ENCODE measurements at regions of chr5 and their contacts with region 1.

Region 1: GRCh38 chr5:96601811-96602244 is 60.3 kb upstream of the CAST start:
- DNase-seq: peak; percentile 59 to 78 (median 67)
- H3K4me3 ChIP-seq: no peak overlapping the region
- H3K27ac ChIP-seq: no peak overlapping the region
- H3K4me1 ChIP-seq: no peaks in the 10 kb centered on the region
- H3K27me3 ChIP-seq: peaks cover 0 to 5% (median 2%) of the 10 kb centered on the region in 5 experiments

Region 2: GRCh38 chr5:96315431-96315830 is 286.4 kb before region 1 on chr5:
- CTCF ChIA-PET with region 1: no interaction called
- POLR2A ChIA-PET with region 1: no interaction called
- DNase-seq: no peak
- H3K4me3 ChIP-seq: no peak overlapping the region
- H3K27ac ChIP-seq: no peak overlapping the region
- H3K4me1 ChIP-seq: no peaks in the 10 kb centered on the region
- H3K27me3 ChIP-seq: no peaks in the 10 kb centered on the region

Region 3: DNA sequence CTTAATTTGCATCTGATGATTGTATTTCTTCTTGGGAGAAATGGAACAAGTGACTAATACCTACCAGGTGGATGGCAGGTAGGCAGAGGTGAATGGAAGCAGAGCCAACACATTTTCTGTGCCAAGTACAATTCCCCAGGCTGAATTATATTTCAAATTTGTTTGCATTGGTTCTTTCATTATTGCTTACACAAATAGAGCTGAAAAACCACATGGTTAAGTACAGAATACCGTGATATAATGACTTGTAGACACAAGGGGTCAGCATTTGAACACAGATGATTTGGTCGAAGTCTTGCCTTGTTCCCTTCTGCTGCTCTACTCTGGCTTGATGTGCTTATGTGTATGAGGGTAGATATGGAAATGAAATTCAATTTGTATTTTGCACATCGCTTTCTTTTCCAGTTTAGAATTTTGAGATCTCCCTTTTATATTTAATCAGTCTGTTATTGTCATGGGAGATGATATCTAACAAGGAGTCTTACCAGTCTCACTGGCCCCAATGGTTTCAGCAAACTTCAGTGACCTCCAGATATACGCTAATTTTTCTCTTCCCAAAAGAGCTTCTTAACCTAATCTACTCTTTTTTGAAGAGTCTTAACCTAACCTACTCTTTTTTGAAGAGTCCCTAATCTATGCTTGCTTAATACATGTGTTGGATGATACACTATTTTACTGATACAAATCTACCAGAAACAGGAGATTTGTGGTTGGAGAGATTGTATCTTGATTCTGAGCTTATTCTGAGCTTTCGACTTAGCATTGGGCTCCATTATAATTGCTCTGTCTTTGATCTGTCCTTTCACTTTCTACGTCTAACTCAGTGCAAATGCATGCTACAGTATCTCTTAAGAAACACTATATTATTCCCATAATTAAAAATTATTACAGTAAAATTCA is 256.9 kb before region 1 on chr5:
- CTCF ChIA-PET with region 1: interaction called, 57 read pairs
- POLR2A ChIA-PET with region 1: no interaction called
- DNase-seq: peak; percentile 67 to 87 (median 84)
- H3K4me3 ChIP-seq: no peak overlapping the region
- H3K27ac ChIP-seq: no peak overlapping the region
- H3K4me1 ChIP-seq: peaks cover 0 to 6% (median 2%) of the 10 kb centered on the region in 4 experiments
- H3K27me3 ChIP-seq: peaks cover 0 to 4% (median 0%) of the 10 kb centered on the region in 5 experiments

Region 4: DNA sequence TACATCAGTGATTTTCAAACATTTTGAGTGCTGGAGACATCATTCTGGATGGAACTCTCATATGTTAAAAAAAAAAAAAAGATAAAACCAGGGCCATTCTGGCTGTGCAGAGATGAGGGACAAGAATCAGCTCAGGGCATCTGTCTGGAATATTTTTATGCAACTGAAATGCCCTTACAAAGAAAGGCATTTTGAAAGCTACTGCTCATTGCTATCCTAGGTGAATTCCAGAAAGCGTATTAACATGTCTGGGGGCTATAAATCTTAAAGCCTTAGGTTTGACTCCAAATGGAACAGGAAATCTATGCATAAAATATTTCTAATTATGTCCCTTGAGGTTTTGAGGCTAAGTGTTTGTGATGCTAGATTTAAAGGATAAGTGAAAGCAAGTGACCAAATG is 153.9 kb before region 1 on chr5:
- CTCF ChIA-PET with region 1: no interaction called
- POLR2A ChIA-PET with region 1: no interaction called
- DNase-seq: no peak
- H3K4me3 ChIP-seq: no peak overlapping the region
- H3K27ac ChIP-seq: no peak overlapping the region
- H3K4me1 ChIP-seq: no peaks in the 10 kb centered on the region
- H3K27me3 ChIP-seq: peaks cover 2 to 5% (median 3%) of the 10 kb centered on the region in 5 experiments

Region 5: DNA sequence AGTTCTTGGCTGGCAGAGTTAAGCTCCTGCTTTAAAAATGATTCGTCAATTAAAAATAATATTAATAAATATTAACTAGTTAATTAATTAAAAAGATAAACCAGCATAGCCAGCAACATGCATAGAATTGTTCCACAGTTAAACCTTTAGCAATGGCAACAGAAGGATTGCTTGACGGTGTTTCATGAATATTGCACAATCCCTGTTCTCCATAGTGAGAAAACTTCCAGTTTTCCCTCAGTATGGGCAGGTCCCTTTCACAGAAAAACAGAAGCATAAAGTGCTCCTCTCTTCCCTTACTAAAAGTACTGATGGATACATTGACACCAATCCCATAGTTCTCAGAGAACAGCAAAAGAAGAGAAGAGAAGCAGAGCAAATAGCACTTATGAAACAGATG is 11.0 kb before region 1 on chr5:
- CTCF ChIA-PET with region 1: interaction called, 12 read pairs
- POLR2A ChIA-PET with region 1: interaction called, 4 read pairs
- DNase-seq: no peak
- H3K4me3 ChIP-seq: no peak overlapping the region
- H3K27ac ChIP-seq: no peak overlapping the region
- H3K4me1 ChIP-seq: no peaks in the 10 kb centered on the region
- H3K27me3 ChIP-seq: peaks cover 0 to 2% (median 0%) of the 10 kb centered on the region in 5 experiments

Region 6: GRCh38 chr5:96614110-96614691 is 12.4 kb after region 1 on chr5:
- CTCF ChIA-PET with region 1: interaction called, 24 read pairs
- POLR2A ChIA-PET with region 1: no interaction called
- DNase-seq: peak; percentile 45 to 65 (median 61)
- H3K4me3 ChIP-seq: no peak overlapping the region
- H3K27ac ChIP-seq: no peak overlapping the region
- H3K4me1 ChIP-seq: peaks cover 0 to 6% (median 3%) of the 10 kb centered on the region in 4 experiments
- H3K27me3 ChIP-seq: no peaks in the 10 kb centered on the region

Region 7: DNA sequence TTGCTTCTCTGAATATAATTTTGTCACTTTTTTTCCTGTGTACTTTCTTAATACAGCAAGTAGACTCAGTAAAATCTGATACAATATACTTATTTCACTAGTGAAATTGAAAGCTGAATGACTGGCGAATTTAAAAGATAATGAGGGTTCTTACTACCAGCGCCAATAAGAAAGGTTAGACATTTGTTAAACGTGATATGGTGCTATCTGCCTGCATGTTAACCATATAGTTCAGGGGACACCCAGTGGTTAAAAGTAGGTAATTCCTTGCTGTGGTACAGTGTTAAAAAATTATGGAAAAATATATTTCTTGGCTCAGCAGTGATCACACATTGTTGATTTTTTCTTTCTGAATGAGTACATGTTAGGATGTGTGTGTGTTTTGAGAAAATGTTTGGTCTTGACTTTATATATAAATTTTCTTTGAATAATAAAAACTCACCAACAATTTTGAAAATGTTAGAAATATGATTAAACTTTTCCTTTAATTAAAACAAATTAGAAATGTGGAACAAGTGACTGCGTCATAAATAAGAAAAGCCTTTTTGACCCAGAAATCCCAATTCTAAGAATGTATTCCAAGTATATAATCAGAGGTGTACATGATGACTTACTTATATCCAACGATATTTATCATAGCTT is 86.1 kb after region 1 on chr5:
- CTCF ChIA-PET with region 1: interaction called, 12 read pairs
- POLR2A ChIA-PET with region 1: no interaction called
- DNase-seq: peak; percentile 52 to 73 (median 71)
- H3K4me3 ChIP-seq: peak overlapping the region in 1 of 7 experiments; percentile 52
- H3K27ac ChIP-seq: no peak overlapping the region
- H3K4me1 ChIP-seq: no peaks in the 10 kb centered on the region
- H3K27me3 ChIP-seq: no peaks in the 10 kb centered on the region